Posterior cingulate gyrus (tissue), 11 donors: ENCODE measurements at regions of chrX and their contacts with region 1.

Region 1: GRCh38 chrX:24054182-24055042 is at the start of gene EIF2S3:
- DNase-seq: peak; percentile 71 to 98 (median 84)

Region 2: DNA sequence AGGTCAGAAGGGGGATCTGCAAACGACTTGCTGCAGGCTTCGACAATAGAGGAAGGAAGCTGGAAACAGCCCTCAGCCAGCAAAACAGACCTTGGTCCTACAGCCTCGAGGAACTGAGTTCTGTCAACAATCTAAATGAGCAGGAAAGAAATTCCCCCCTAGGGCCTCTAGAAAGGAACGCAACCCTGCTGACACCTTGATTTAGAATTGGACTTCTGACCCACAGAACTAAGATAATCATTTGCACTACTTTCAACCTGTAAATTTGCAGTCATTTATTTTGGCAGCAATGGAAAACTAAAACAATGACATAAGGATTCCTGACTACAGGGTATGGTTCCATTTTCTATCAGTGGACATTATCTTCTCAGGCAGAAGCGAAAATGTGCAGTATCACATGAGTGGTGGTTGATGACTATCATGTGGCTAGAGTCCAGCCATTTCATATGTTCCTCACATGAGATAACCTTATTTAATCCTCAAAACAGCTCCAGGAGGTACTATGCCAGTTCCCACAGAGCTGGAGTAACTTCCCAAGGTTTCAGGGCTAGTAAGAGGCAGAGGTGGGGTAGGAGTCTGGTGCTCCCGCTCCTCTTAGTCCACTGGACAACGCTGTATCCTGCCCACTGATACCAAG is 209.8 kb before region 1 on chrX:
- intact Hi-C with region 1: no loop called
- DNase-seq: no peak

Region 3: DNA sequence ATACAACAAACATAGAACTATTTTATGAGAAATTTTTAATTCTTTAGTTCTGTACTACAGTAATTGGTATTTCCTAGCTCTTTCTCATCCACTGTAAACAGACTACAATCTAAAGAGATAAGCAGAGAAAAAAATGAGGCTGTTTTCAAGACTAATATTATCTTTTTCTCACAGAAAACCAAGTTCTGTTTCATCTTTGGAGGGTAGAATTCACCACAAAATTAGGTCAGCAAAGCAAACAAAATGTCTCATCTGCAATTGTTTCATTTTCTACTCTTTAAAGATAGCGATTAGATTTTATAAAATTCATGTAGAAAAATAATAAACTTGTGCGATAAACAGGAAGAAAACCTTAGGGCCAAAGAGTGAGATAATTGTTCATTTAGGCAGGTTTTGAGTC is 157.4 kb before region 1 on chrX:
- intact Hi-C with region 1: no loop called
- DNase-seq: no peak

Region 4: GRCh38 chrX:23907498-23908218 is 146.8 kb before region 1 on chrX and contains the starts of genes APOO and CXorf58:
- intact Hi-C with region 1: loop called (anchors 2 kb)
- DNase-seq: peak; percentile 72 to 99 (median 86)

Region 5: DNA sequence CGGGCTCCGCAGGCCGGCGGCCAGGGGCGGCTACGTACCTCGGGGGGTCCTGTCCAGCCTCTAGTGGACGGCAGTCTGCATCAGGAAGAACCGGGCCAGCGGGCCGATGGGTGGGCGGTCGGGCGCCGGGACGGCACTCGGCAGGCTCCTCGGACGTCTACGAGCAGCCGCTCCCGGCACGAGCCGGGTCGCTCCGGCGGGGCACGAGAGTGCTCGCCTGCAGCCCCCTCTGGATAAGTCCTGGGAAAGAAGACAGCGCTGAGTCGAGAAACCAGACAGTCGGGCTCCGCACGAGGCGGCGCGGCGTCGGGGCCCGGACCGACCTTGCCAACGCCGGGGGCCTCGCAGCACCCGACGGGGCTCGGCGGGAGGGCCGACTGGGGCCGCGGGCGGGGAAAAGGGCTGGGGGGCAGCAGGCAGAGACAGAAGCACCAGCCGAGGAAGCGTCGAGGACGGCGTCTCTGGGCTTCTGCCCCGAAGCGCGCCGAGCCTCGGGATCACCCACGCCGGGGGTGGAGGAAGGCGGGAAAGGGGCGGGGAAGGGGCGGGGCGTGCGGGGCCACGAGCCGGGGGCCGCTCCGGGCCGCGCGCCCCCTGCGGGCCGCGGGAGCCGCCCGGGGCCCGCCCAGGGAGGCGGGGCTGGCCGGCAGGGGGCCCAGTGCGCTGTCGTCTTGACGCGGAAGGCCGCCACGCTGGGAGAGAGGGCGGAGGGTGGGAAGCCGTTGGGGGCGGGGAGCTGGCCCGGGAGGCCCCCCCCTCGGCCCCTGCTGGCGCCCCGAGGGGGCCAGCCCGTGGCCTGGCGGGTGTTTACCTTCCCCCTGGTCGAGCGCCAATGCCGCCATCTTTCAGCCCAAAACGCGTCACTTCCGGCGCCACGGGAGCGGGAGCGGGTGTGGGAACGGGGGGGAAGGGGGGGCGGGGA is 29.3 kb before region 1 on chrX:
- intact Hi-C with region 1: loop called (anchors 1 kb)
- DNase-seq: peak; percentile 58 to 96 (median 74)

Region 6: GRCh38 chrX:24150051-24150790 is 95.8 kb after region 1 on chrX:
- intact Hi-C with region 1: loop called (anchors 1 kb)
- DNase-seq: peak; percentile 59 to 98 (median 89)

Region 7: GRCh38 chrX:24392709-24393108 is 338.3 kb after region 1 on chrX:
- intact Hi-C with region 1: no loop called
- DNase-seq: peak in 2 of 10 donors; percentile 7 to 19